ENCODE measurements at regions of chr4 and their contacts with region 1.

Region 1: DNA sequence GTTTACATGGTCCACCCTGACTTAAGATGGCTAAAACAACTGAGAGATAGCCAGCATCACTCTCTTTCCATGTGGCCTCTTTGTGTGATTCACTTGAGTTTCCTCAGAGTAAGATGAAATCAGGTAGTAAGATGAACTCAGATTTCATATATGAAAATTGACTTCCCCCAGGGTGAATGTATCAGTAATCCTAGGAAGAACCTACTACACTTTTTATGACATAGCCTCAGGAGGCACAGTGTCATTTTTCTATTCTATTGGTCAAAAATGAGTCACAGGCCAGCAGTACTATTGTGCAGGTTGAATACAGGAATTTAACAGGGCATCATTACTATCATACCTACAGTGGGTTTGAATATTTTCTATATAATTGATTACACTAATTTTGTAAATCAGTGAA is 14.6 kb upstream of the SULT1E1 start:
- DNase-seq: no peak
- H3K4me3 ChIP-seq: no peak overlapping the region
- H3K27ac ChIP-seq: no peak overlapping the region
- H3K4me1 ChIP-seq: peaks cover 0 to 26% (median 2%) of the 10 kb centered on the region in 4 donors
- H3K27me3 ChIP-seq: no peaks in the 10 kb centered on the region
- CTCF ChIP-seq: no peak
- EP300 ChIP-seq: no peak
- POLR2A ChIP-seq: no peak

Region 2: DNA sequence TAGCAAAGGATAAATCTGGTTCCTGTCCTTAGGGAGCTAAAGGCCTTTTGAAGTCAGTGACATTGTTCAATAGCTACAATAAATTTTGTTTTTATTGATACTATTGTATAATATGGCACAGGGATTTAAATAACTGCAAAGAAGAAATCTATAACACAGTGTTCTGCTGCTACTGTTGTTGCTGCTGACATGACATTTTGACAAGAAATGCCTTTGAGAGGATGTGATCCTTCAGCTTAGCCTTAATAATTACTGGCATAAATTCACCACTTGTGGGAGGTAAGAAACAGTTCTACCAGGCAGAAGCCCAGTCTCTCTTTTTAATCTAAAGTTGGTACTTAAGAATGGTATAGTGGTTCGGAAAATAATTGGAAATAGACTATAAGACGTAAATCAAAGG is 18.7 kb before region 1 on chr4:
- in situ Hi-C with region 1: no loop called
- intact Hi-C with region 1: loop called (anchors 2 kb)
- DNase-seq: no peak
- H3K4me3 ChIP-seq: no peak overlapping the region
- H3K27ac ChIP-seq: no peak overlapping the region
- H3K4me1 ChIP-seq: peaks cover 0 to 14% (median 3%) of the 10 kb centered on the region in 4 donors
- H3K27me3 ChIP-seq: no peaks in the 10 kb centered on the region
- CTCF ChIP-seq: no peak
- EP300 ChIP-seq: no peak
- POLR2A ChIP-seq: no peak

Region 3: DNA sequence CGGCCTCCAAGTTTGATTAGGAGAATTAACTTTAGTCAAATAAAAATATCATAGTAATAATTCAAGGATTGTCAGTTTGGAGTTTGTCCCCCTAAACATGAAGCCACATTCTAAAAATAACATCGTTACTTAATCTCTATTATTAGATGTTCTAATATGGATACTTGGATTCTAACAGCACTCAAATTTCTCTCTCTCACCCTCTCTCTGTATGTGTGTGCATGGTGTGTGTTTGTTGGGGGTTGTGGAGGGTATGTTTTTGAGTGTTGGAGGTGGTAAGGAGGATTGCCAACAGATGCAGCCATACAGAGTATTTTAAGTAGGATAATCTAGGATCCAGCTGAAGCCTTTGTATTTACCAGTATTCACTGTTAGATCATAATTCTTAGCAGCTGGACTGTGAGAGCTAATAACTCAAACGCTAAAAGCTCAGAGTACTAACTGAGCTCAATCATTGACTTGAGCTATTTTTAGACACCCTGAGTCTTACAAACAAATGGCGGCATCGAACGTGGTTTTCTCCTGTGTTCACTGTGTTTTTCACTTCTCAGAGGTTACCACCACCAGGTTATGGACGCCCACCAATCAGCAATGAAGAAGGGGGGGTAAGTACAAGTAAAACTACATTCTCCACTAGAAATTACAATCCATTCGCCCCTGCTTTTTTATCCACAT is 762.9 kb after region 1 on chr4:
- in situ Hi-C with region 1: no loop called
- intact Hi-C with region 1: no loop called
- DNase-seq: no peak
- H3K4me3 ChIP-seq: no peak overlapping the region
- H3K27ac ChIP-seq: no peak overlapping the region
- H3K4me1 ChIP-seq: peaks cover 0 to 5% (median 0%) of the 10 kb centered on the region in 4 donors
- H3K27me3 ChIP-seq: no peaks in the 10 kb centered on the region
- CTCF ChIP-seq: no peak
- EP300 ChIP-seq: no peak
- POLR2A ChIP-seq: no peak

Region 4: GRCh38 chr4:71020611-71021010 is 1146.1 kb after region 1 on chr4:
- in situ Hi-C with region 1: no loop called
- intact Hi-C with region 1: no loop called
- DNase-seq: no peak
- H3K4me3 ChIP-seq: no peak overlapping the region
- H3K27ac ChIP-seq: no peak overlapping the region
- H3K4me1 ChIP-seq: peaks cover 0 to 3% (median 1%) of the 10 kb centered on the region in 4 donors
- H3K27me3 ChIP-seq: no peaks in the 10 kb centered on the region
- CTCF ChIP-seq: no peak
- EP300 ChIP-seq: no peak
- POLR2A ChIP-seq: no peak

Measured in transverse colon (tissue), 4 donors.